Sigmoid colon (tissue), 7 donors: ENCODE measurements at regions of chr5 and their contacts with region 1.

Region 1: GRCh38 chr5:58933891-58934628 is 351.2 kb downstream of the RAB3C start:
- DNase-seq: no peak
- H3K4me3 ChIP-seq: no peak overlapping the region
- H3K27ac ChIP-seq: no peak overlapping the region
- H3K4me1 ChIP-seq: no peaks in the 10 kb centered on the region
- H3K27me3 ChIP-seq: no peaks in the 10 kb centered on the region
- CTCF ChIP-seq: no peak
- EP300 ChIP-seq: no peak
- POLR2A ChIP-seq: no peak

Region 2: DNA sequence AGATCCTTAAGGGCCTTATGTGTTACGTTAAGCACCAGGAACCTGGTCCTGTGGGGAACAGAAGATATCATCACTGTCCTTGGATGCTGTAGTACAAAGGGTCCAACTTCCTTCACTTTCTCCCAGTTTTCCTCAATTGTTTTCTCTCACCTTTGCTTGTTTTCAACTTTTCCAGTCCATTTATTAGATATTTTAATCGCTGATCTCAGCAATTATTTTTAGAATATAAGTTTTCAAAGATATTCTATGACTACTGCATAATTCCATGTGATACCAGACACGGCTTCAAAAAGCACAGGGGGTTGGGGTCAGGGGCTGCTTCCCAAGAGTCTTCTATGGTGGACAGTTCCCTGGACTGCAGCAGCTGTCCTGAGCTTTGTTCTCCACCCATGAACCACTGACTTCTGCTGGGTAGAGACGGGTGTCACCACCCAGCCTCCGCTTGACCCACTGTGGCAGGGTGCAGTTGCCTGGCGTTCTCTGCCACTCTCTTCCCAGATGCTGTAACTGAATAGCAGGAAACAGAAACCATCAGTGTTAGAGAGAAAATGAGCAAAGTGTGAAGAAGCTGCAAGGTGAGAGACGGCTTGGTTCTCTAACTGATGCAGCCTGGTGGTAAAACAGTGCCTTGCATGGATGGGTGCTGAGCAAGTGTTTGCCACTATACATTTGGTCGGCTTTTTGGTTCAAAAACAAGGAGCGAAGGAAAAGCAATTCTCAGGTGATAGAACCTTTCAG is 31.8 kb after region 1 on chr5:
- intact Hi-C with region 1: loop called (anchors 5 kb)
- DNase-seq: no peak
- H3K4me3 ChIP-seq: no peak overlapping the region
- H3K27ac ChIP-seq: no peak overlapping the region
- H3K4me1 ChIP-seq: no peaks in the 10 kb centered on the region
- H3K27me3 ChIP-seq: no peaks in the 10 kb centered on the region
- CTCF ChIP-seq: no peak
- EP300 ChIP-seq: no peak
- POLR2A ChIP-seq: no peak

Region 3: GRCh38 chr5:59506285-59506877 is 572.3 kb after region 1 on chr5:
- intact Hi-C with region 1: no loop called
- DNase-seq: no peak
- H3K4me3 ChIP-seq: no peak overlapping the region
- H3K27ac ChIP-seq: no peak overlapping the region
- H3K4me1 ChIP-seq: peaks cover 0 to 30% (median 9%) of the 10 kb centered on the region in 4 donors
- H3K27me3 ChIP-seq: no peaks in the 10 kb centered on the region
- CTCF ChIP-seq: peak in 2 of 4 experiments; percentile 19 to 29
- EP300 ChIP-seq: no peak
- POLR2A ChIP-seq: no peak